ENCODE measurements at regions of chr10 and their contacts with region 1.

Region 1: GRCh38 chr10:119416855-119417254 is 125.7 kb downstream of the RGS10 start:
- DNase-seq: peak; percentile 36 to 82
- H3K4me3 ChIP-seq: no peak overlapping the region
- H3K27ac ChIP-seq: no peak overlapping the region
- H3K4me1 ChIP-seq: peaks cover 0 to 8% (median 4%) of the 10 kb centered on the region in 4 experiments; a peak in 6 of 7 replicates
- H3K27me3 ChIP-seq: no peaks in the 10 kb centered on the region
- CTCF ChIP-seq: peak; percentile 95 to 98 (median 97)
- EP300 ChIP-seq: no peak
- POLR2A ChIP-seq: no peak
- RAD21 ChIP-seq: peak; percentile 94 to 98

Region 2: GRCh38 chr10:119207367-119207668 is 209.5 kb before region 1 on chr10 and contains the start of gene GRK5:
- CTCF ChIA-PET with region 1: interaction called, 272 read pairs
- POLR2A ChIA-PET with region 1: interaction called, 5 read pairs
- DNase-seq: peak; percentile 80 to 89
- H3K4me3 ChIP-seq: peak within 1 kb of the TSS; percentile 51 to 79 (median 62)
- H3K27ac ChIP-seq: peak within 1 kb of the TSS; percentile 41; the same call in 1 of the 2 replicates
- H3K4me1 ChIP-seq: peaks cover 3 to 8% (median 6%) of the 10 kb centered on the region in 4 experiments
- H3K27me3 ChIP-seq: peaks cover 5 to 17% (median 14%) of the 10 kb centered on the region in 4 experiments
- CTCF ChIP-seq: no peak
- EP300 ChIP-seq: no peak
- POLR2A ChIP-seq: no peak; a peak in 1 of 3 replicates
- RAD21 ChIP-seq: no peak
- total RNA-seq, gene GRK5: 2.4 and 2.5 TPM in 2 replicates

Region 3: DNA sequence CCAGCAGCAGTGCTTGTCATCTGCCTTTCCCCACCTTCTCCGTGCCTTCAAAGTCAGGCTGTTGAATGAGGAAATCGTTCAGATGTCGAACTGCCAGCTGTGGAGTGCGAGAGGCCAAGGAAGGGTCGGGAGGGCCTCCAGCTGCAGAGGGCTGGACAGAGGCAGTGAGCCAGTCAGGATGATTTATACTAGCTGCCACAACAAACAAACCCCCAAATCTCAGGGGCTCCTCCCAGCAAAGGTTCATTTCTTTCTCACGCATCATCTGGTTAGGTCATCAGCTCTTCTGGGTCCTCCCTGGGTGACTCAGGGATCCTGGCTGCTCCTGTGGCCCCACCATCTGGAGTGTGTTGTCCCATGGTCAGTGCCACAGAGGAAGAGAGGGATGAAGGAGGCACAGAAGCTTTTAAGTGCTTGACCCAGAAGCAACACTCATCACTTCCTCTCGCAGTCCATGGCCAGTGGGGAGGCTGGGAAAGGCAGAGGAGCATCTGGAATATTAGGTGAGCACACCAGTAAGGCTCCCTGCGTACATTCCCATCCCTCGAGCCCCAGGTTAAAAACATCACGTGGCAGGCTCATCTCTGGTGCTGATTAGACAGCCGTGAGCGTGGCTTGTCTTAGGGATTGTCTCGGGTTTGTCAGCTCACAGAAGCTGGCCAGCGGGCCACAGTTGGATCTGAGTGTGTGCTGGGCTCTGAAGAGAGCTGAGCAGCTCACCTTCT is 15.0 kb before region 1 on chr10:
- CTCF ChIA-PET with region 1: interaction called, 14 read pairs
- POLR2A ChIA-PET with region 1: interaction called, 5 read pairs
- DNase-seq: no peak
- H3K4me3 ChIP-seq: no peak overlapping the region
- H3K27ac ChIP-seq: no peak overlapping the region
- H3K4me1 ChIP-seq: no peaks in the 10 kb centered on the region; a peak in 1 of 7 replicates
- H3K27me3 ChIP-seq: no peaks in the 10 kb centered on the region; a peak in 1 of 7 replicates
- CTCF ChIP-seq: no peak
- EP300 ChIP-seq: no peak
- POLR2A ChIP-seq: no peak
- RAD21 ChIP-seq: no peak

Region 4: GRCh38 chr10:119439922-119440321 is 23.1 kb after region 1 on chr10:
- CTCF ChIA-PET with region 1: interaction called, 29 read pairs
- POLR2A ChIA-PET with region 1: no interaction called
- DNase-seq: no peak
- H3K4me3 ChIP-seq: no peak overlapping the region
- H3K27ac ChIP-seq: no peak overlapping the region
- H3K4me1 ChIP-seq: no peaks in the 10 kb centered on the region; a peak in 1 of 7 replicates
- H3K27me3 ChIP-seq: no peaks in the 10 kb centered on the region
- CTCF ChIP-seq: no peak
- EP300 ChIP-seq: no peak
- POLR2A ChIP-seq: no peak
- RAD21 ChIP-seq: no peak

Region 5: DNA sequence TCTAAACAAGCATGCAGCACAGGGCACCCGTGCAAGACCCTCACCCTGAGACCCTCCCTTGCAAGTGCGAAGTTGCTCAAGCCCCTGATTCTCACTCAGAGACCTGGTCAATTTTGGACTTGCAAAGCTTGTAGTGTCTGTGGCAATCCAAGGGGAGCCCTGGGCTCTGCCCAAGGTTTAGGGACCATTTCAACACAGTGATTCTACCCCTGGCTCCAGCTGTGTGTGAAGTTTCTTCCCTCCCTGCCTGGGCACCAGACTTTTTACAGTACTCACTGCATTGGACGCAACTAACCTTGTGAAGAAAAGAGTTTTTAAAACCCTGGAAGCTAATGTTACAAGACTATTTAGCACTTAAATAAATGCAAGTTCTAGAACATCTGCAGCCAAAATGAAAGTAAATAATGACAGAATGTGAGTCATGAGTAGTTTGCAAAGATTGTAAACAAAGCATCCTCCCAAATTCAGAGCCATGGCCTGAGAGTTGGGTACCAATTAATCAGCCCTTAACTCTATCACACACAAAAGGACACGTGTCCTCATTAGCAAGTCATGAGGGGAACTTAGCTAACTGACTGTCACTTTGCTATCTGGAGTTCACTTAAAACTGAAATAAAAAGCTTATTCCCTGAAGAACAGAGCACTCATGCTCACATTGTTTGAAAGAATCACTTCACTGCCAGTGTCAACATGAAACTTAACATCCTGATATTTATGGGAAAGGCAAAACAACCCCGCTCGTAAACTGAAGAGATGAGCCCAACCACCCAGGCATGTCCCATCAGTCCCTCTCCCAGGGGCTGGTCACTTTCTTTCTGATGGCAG is 77.6 kb after region 1 on chr10:
- CTCF ChIA-PET with region 1: interaction called, 11 read pairs
- POLR2A ChIA-PET with region 1: no interaction called
- DNase-seq: no peak
- H3K4me3 ChIP-seq: no peak overlapping the region
- H3K27ac ChIP-seq: no peak overlapping the region
- H3K4me1 ChIP-seq: peaks cover 0 to 4% (median 0%) of the 10 kb centered on the region in 4 experiments; a peak in 3 of 7 replicates
- H3K27me3 ChIP-seq: no peaks in the 10 kb centered on the region; a peak in 2 of 7 replicates
- CTCF ChIP-seq: no peak
- EP300 ChIP-seq: no peak
- POLR2A ChIP-seq: no peak
- RAD21 ChIP-seq: no peak

Region 6: GRCh38 chr10:119541459-119542356 is 124.9 kb after region 1 on chr10:
- CTCF ChIA-PET with region 1: no interaction called
- POLR2A ChIA-PET with region 1: no interaction called
- DNase-seq: peak in 1 of 2 experiments; percentile 55
- H3K4me3 ChIP-seq: peak overlapping the region; percentile 49 to 79 (median 59)
- H3K27ac ChIP-seq: no peak overlapping the region
- H3K4me1 ChIP-seq: peaks cover 2 to 14% (median 7%) of the 10 kb centered on the region in 4 experiments; a peak in 6 of 7 replicates
- H3K27me3 ChIP-seq: peaks cover 17 to 44% (median 28%) of the 10 kb centered on the region in 4 experiments
- CTCF ChIP-seq: no peak
- EP300 ChIP-seq: no peak
- POLR2A ChIP-seq: no peak
- RAD21 ChIP-seq: no peak

Measured in H1 (cell line).